RWPE1 (cell line): ENCODE measurements at regions of chr9 and their contacts with region 1.

Region 1: GRCh38 chr9:130107234-130107861 is 53.6 kb downstream of the GPR107 start:
- DNase-seq: peak; percentile 90
- H3K27ac ChIP-seq: no peak overlapping the region
- CTCF ChIP-seq: peak; percentile 97

Region 2: DNA sequence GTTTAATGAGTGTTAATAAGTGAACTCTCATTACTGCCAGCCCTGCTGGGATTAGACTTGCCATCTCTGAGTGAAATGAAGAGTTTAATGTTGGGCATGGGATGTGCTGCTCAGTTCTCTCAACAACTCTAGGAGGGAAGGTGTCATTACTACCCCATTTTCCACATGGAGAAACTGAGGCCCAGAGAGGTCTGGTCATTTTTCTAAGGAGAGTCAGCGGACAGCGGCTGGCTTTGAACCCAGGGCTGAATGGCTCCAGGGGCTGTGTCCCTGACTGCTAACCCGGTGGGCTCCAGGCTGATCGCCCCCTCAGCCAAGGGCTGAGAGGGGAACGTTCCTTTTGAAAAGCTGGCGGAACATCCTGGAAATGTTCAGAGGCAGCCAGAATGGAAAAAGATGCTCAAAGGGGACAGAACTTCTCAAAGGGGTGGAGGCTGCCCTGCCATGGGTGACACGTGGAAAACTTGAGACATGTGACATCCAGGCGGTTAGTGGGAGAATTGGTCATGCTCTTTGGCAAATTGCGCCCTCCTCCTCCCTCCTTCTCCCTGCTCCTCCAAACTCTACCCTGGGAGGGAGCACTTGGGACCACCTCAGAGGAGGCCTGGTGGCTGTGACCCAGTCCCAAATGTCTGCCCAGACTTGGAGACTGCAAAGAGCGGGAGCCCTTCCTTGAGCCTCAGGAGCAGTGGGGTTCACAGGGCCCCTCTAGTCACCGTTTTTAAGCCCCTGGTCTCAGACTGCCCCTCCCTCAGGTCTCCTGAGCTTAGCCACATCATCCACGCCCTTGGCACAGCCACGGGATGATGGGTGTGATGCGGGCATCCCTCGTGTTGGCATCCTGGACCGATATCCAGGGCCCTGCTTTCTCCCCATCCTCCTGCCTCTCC is 1875.5 kb before region 1 on chr9:
- CTCF ChIA-PET with region 1: no interaction called
- POLR2A ChIA-PET with region 1: no interaction called
- DNase-seq: no peak
- H3K27ac ChIP-seq: no peak overlapping the region; the same call in 1 of the 2 replicates
- CTCF ChIP-seq: no peak

Region 3: DNA sequence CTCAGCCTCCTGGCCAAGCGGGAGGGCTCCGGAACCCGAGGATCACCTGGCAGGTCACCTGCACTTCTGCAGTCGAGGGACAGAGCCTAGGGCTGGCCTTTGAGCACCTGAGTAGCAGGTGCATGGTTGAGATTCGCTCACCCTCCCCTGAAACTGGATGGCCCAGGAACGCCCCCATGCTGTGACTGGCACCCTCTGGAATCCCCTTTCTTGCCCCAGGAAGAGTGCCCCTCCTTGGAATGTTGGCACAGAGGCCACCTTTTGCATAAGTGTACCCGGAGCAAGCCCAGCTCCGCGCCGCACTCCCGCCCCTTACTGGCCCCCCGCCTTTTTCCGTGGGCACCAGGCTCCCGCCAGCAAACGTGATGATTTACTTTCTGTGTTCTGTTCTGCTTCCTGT is 816.7 kb before region 1 on chr9:
- CTCF ChIA-PET with region 1: no interaction called
- POLR2A ChIA-PET with region 1: no interaction called
- DNase-seq: no peak
- H3K27ac ChIP-seq: peak overlapping the region; percentile 18; the same call in 1 of the 2 replicates
- CTCF ChIP-seq: no peak

Region 4: GRCh38 chr9:130073373-130073772 is 34.0 kb before region 1 on chr9:
- CTCF ChIA-PET with region 1: no interaction called
- POLR2A ChIA-PET with region 1: no interaction called
- DNase-seq: no peak
- H3K27ac ChIP-seq: peak overlapping the region; percentile 8; the same call in 1 of the 2 replicates
- CTCF ChIP-seq: no peak

Region 5: GRCh38 chr9:130243015-130243734 is 135.8 kb after region 1 on chr9:
- CTCF ChIA-PET with region 1: interaction called, 19 read pairs
- POLR2A ChIA-PET with region 1: no interaction called
- DNase-seq: peak; percentile 79
- H3K27ac ChIP-seq: no peak overlapping the region
- CTCF ChIP-seq: peak; percentile 100